ENCODE measurements at regions of chr3 and their contacts with region 1.

Region 1: DNA sequence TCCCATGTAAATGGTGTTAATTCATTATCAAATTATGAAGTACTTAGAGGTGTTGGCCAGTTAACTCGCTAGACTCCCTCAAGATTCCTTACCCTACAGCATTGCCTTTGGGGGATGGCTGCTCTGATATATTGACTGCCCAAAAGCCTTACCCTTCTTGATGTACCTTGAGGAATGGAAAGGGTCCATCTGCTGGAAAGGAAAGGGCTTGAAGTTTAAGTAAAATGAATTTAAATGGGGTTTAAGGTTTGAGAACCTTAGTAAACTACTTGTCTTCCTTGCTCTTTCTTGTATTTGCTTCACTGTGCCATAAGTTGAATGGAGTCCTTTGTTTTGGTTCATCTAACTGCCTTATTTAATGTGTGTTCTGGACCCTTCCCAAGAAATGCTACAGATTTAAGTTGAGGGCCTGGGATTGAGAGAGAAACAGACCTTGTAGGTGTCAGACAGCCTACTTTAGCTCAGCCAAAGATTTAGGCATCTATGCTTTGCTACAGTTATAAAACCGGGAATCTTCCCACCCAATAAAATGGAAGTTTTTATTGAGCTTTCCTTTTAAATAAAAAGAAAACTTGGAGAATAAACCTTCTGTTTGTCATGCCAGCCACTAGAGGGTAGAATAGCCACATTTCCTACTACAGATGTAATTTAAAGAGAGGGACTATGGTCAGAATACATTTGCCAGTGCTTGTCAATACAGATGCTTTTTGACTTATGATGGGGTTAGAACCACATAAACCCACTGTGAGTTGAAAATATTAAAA is 25.3 kb downstream of the CMSS1 start:
- DNase-seq: no peak
- H3K4me3 ChIP-seq: no peak overlapping the region
- H3K27ac ChIP-seq: no peak overlapping the region
- H3K4me1 ChIP-seq: peaks cover 0 to 7% (median 4%) of the 10 kb centered on the region in 4 experiments; a peak in 3 of 7 replicates
- H3K27me3 ChIP-seq: no peaks in the 10 kb centered on the region
- CTCF ChIP-seq: peak in 2 of 3 experiments; percentile 29 to 56; a peak in 2 of 4 replicates
- EP300 ChIP-seq: no peak
- POLR2A ChIP-seq: no peak
- RAD21 ChIP-seq: peak; percentile 76 to 82

Region 2: DNA sequence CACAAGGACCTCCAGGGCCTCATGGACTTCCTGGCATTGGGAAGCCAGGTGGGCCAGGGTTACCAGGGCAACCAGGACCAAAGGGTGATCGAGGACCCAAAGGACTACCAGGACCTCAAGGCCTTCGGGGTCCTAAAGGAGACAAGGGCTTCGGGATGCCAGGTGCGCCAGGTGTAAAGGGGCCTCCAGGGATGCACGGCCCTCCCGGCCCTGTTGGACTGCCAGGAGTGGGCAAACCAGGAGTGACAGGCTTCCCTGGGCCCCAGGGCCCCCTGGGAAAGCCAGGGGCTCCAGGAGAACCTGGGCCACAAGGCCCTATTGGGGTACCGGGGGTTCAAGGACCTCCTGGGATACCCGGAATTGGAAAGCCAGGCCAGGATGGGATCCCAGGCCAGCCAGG is 48.5 kb before region 1 on chr3:
- CTCF ChIA-PET with region 1: no interaction called
- POLR2A ChIA-PET with region 1: no interaction called
- DNase-seq: no peak
- H3K4me3 ChIP-seq: no peak overlapping the region
- H3K27ac ChIP-seq: no peak overlapping the region
- H3K4me1 ChIP-seq: no peaks in the 10 kb centered on the region
- H3K27me3 ChIP-seq: no peaks in the 10 kb centered on the region
- CTCF ChIP-seq: no peak
- EP300 ChIP-seq: no peak
- POLR2A ChIP-seq: no peak
- RAD21 ChIP-seq: no peak

Region 3: GRCh38 chr3:99869621-99870020 is 26.6 kb after region 1 on chr3:
- CTCF ChIA-PET with region 1: interaction called, 20 read pairs
- POLR2A ChIA-PET with region 1: no interaction called
- DNase-seq: no peak
- H3K4me3 ChIP-seq: no peak overlapping the region
- H3K27ac ChIP-seq: no peak overlapping the region
- H3K4me1 ChIP-seq: peaks cover 0 to 2% (median 0%) of the 10 kb centered on the region in 4 experiments; a peak in 2 of 7 replicates
- H3K27me3 ChIP-seq: peaks cover 7 to 35% (median 27%) of the 10 kb centered on the region in 4 experiments
- CTCF ChIP-seq: no peak
- EP300 ChIP-seq: no peak
- POLR2A ChIP-seq: no peak
- RAD21 ChIP-seq: no peak

Region 4: DNA sequence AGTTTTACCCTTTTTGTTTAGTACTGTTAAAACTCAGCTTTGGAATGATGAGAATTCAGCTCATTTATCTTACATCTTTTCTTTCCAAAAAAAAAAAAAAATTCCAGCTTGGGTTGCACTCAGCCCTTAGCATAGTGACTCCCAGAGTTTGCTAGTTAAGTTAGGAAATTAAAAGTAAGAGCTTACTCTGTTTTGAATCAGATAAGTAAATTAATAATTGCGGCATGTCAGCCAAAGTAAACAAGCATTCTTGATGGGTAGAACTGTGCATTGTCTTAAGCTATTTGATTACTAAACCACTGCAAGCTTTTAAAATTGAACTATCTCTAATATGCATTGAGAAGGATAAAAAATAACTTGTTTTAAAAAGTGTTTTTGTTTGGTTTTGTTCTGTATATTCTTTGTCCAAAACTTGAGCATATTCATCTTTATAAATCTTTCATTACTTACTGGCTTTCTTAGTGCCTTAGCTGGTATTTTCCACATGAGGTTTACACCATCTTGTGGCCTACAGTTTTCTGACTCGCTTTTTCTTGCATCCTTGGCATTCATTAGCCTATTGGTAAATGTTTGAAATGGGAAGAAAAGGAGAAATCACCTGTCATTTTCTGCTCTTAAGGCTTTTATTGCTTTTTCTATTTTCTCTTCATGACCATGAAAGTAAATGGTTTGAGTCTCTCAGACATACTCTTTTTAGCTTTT is 163.7 kb after region 1 on chr3:
- CTCF ChIA-PET with region 1: interaction called, 17 read pairs
- POLR2A ChIA-PET with region 1: no interaction called
- DNase-seq: no peak
- H3K4me3 ChIP-seq: no peak overlapping the region
- H3K27ac ChIP-seq: no peak overlapping the region
- H3K4me1 ChIP-seq: peaks cover 3 to 8% (median 5%) of the 10 kb centered on the region in 4 experiments; a peak in 5 of 7 replicates
- H3K27me3 ChIP-seq: no peaks in the 10 kb centered on the region
- CTCF ChIP-seq: no peak
- EP300 ChIP-seq: no peak
- POLR2A ChIP-seq: no peak
- RAD21 ChIP-seq: peak; percentile 23 to 45; a peak in 3 of 4 replicates

Region 5: GRCh38 chr3:100089812-100090668 is 247.0 kb after region 1 on chr3:
- CTCF ChIA-PET with region 1: interaction called, 21 read pairs
- POLR2A ChIA-PET with region 1: no interaction called
- DNase-seq: peak in 1 of 2 experiments; percentile 10
- H3K4me3 ChIP-seq: no peak overlapping the region
- H3K27ac ChIP-seq: no peak overlapping the region
- H3K4me1 ChIP-seq: peaks cover 0 to 7% (median 3%) of the 10 kb centered on the region in 4 experiments; a peak in 5 of 7 replicates
- H3K27me3 ChIP-seq: no peaks in the 10 kb centered on the region
- CTCF ChIP-seq: peak; percentile 49 to 76 (median 51)
- EP300 ChIP-seq: no peak
- POLR2A ChIP-seq: no peak
- RAD21 ChIP-seq: peak; percentile 54 to 61

Region 6: GRCh38 chr3:100125161-100125938 is 282.3 kb after region 1 on chr3:
- CTCF ChIA-PET with region 1: no interaction called
- POLR2A ChIA-PET with region 1: no interaction called
- DNase-seq: no peak
- H3K4me3 ChIP-seq: no peak overlapping the region
- H3K27ac ChIP-seq: no peak overlapping the region
- H3K4me1 ChIP-seq: peaks cover 0 to 2% (median under 1%) of the 10 kb centered on the region in 4 experiments; a peak in 1 of 7 replicates
- H3K27me3 ChIP-seq: no peaks in the 10 kb centered on the region
- CTCF ChIP-seq: no peak
- EP300 ChIP-seq: no peak
- POLR2A ChIP-seq: no peak
- RAD21 ChIP-seq: no peak

Region 7: GRCh38 chr3:100260685-100261484 is 417.9 kb after region 1 on chr3 and contains the start of gene TBC1D23:
- CTCF ChIA-PET with region 1: interaction called, 13 read pairs
- POLR2A ChIA-PET with region 1: interaction called, 3 read pairs
- DNase-seq: peak; percentile 96 to 98
- H3K4me3 ChIP-seq: peak within 1 kb of the TSS; percentile 52 to 98 (median 89)
- H3K27ac ChIP-seq: peak within 1 kb of the TSS; percentile 38; the same call in 1 of the 2 replicates
- H3K4me1 ChIP-seq: peaks cover 0 to 4% (median 2%) of the 10 kb centered on the region in 4 experiments; a peak in 3 of 7 replicates
- H3K27me3 ChIP-seq: no peaks in the 10 kb centered on the region
- CTCF ChIP-seq: no peak
- EP300 ChIP-seq: no peak
- POLR2A ChIP-seq: peak in 1 of 2 experiments; percentile 85; a peak in 2 of 3 replicates
- RAD21 ChIP-seq: no peak
- total RNA-seq, gene TBC1D23: 24.7 and 29.3 TPM in 2 replicates

Measured in H1 (cell line).